Body of pancreas (tissue), 4 donors: ENCODE measurements at regions of chr17 and their contacts with region 1.

Region 1: DNA sequence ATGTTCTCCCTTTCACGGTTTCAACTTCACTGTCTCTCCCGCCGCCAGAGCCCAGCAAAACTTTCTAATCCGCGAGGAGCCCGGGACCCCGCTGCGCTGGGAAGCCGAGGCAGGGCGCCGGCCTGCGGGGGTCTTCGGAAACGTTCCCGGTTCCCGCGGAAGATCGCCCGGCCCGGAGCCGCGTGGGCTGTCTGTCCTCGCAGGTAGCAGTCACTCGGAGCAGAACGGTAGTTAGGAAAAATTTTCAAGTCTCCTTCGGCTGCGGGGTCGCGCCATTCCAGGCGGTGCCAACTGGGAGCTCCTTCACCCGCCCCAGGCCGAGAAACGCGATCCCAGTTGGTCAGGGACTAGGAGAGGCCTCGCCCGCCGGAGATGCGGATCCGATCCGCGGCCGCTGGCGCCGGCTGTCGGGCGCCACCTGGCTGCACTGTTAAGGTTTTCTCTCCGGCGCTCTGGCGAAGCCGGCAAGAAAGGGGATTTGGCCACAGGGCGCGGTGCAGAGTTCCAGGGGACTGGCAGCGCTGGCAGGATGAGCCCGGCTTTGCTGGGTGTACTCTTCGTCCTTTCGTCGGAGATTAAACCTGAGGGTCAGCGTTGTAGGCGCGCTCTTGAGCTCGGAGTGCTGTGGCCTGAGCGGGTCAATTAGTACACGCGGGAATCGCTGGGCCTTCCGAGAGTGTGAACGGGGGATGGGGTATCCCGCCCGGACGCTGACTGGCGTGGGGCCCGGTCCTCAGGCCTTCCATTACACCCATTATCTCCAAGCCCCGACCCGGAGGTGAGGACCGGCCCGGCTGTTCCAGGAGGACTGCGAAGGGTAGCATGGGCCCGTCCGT is 135.4 kb downstream of the KCNJ12 start:
- DNase-seq: peak; percentile 81 to 88 (median 84)
- ATAC-seq: peak; percentile 95
- H3K4me3 ChIP-seq: no peak overlapping the region
- H3K27ac ChIP-seq: peak overlapping the region in 3 of 4 donors; percentile 41 to 67 (median 53)
- H3K4me1 ChIP-seq: peaks cover 17% of the 10 kb centered on the region
- H3K27me3 ChIP-seq: no peaks in the 10 kb centered on the region
- CTCF ChIP-seq: peak; percentile 58 to 79 (median 69)
- POLR2A ChIP-seq: no peak

Region 2: DNA sequence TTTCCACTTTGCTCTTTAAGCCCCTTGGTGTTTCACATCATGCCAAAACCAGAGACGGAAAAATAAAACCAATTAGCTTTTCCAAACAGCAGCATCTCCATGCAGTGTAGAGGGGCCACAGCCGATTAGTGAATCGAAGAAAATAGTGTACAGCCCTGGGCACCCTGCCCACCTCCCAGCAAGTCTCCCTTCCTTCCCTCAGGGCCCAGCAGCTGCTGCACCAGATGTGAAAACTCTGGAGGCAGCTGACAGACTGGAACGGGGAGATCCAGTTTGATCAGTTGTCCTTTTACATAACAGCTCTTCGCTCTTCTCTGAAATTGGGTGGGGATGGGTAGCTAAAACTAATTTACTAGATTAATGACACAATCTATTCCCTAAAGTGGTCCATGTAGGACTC is 316.9 kb before region 1 on chr17:
- intact Hi-C with region 1: no loop called
- DNase-seq: no peak
- ATAC-seq: no peak
- H3K4me3 ChIP-seq: no peak overlapping the region
- H3K27ac ChIP-seq: no peak overlapping the region
- H3K4me1 ChIP-seq: no peaks in the 10 kb centered on the region
- H3K27me3 ChIP-seq: no peaks in the 10 kb centered on the region
- CTCF ChIP-seq: no peak
- POLR2A ChIP-seq: no peak

Region 3: DNA sequence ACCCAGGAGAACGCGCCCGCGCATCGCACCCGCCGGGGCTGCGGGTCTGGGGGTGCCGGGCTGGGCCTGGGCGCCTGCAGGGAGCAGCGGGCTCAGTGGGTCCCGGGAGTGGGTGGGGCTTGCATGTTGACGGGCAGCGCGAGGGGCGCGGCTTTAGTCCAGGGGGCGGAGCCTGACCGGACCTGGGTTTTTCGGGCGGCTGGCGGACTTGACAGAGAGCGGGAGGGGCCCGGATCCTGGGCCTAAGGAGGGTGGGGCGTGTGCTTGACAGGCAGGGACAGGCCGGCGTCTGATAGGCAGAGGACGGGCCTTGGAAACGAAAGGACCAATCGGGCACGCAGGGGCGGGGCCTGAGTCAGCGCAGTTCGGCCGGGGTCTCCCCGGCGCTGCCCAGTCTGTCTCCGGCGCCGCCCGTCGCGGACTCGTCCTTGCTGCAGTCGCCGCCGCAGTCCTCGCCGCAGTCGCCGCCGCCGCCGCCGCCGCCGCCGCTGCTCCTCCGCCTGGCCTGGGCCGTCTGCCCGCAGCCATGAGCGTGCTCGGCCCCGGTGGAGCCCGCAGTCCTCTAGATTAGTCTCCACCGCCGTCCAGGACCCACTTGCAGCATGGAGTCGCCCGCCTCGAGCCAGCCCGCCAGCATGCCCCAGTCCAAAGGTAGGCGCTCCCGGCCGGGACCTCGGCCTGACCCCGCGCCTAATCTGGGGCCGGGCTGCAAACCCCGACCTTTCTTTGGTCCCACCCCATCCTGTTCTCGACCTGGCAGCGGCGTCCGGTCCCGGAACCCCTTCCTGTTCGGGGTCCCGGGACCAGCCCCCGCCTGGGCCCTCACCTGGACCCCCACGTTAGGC is 227.0 kb before region 1 on chr17 and contains the start of gene MAP2K3:
- intact Hi-C with region 1: loop called (anchors 5 kb)
- DNase-seq: peak; percentile 99 to 100 (median 100)
- ATAC-seq: peak; percentile 82
- H3K4me3 ChIP-seq: peak within 1 kb of the TSS; percentile 76 to 82
- H3K27ac ChIP-seq: peak within 1 kb of the TSS; percentile 96 to 99 (median 97)
- H3K4me1 ChIP-seq: peaks cover 51% of the 10 kb centered on the region
- H3K27me3 ChIP-seq: no peaks in the 10 kb centered on the region
- CTCF ChIP-seq: no peak
- POLR2A ChIP-seq: peak; percentile 87 to 99 (median 93)
- total RNA-seq, gene MAP2K3: 15.3 to 48.1 TPM